Heart right ventricle (tissue), 16 donors: ENCODE measurements at regions of chr10 and their contacts with region 1.

Region 1: GRCh38 chr10:90769946-90770841 is 87.6 kb downstream of the HTR7 start:
- DNase-seq: no peak
- ATAC-seq: peak in 2 of 8 donors; percentile 9 to 41
- H3K4me3 ChIP-seq: no peak overlapping the region
- H3K27ac ChIP-seq: no peak overlapping the region
- H3K4me1 ChIP-seq: peaks cover 0 to 3% (median 0%) of the 10 kb centered on the region in 9 donors
- H3K27me3 ChIP-seq: no peaks in the 10 kb centered on the region
- CTCF ChIP-seq: no peak

Region 2: GRCh38 chr10:90741926-90742565 is 28.1 kb before region 1 on chr10:
- intact Hi-C with region 1: loop called in 1 of 10 experiments (anchors 2 kb)
- DNase-seq: no peak
- ATAC-seq: peak in 6 of 8 donors; percentile 33 to 67 (median 53)
- H3K4me3 ChIP-seq: no peak overlapping the region
- H3K27ac ChIP-seq: peak overlapping the region in 1 of 10 donors; percentile 49
- H3K4me1 ChIP-seq: no peaks in the 10 kb centered on the region
- H3K27me3 ChIP-seq: peaks cover 0 to 7% (median 1%) of the 10 kb centered on the region in 7 donors
- CTCF ChIP-seq: no peak

Region 3: GRCh38 chr10:91590142-91590903 is 820.1 kb after region 1 on chr10:
- intact Hi-C with region 1: no loop called
- DNase-seq: peak; percentile 57 to 58
- ATAC-seq: peak; percentile 17 to 46 (median 34)
- H3K4me3 ChIP-seq: no peak overlapping the region
- H3K27ac ChIP-seq: peak overlapping the region; percentile 78 to 95 (median 90)
- H3K4me1 ChIP-seq: peaks cover 22 to 83% (median 71%) of the 10 kb centered on the region in 9 donors
- H3K27me3 ChIP-seq: no peaks in the 10 kb centered on the region
- CTCF ChIP-seq: no peak